Sciatic nerve (tissue), 2 donors: ENCODE measurements at regions of chr11 and their contacts with region 1.

Region 1: DNA sequence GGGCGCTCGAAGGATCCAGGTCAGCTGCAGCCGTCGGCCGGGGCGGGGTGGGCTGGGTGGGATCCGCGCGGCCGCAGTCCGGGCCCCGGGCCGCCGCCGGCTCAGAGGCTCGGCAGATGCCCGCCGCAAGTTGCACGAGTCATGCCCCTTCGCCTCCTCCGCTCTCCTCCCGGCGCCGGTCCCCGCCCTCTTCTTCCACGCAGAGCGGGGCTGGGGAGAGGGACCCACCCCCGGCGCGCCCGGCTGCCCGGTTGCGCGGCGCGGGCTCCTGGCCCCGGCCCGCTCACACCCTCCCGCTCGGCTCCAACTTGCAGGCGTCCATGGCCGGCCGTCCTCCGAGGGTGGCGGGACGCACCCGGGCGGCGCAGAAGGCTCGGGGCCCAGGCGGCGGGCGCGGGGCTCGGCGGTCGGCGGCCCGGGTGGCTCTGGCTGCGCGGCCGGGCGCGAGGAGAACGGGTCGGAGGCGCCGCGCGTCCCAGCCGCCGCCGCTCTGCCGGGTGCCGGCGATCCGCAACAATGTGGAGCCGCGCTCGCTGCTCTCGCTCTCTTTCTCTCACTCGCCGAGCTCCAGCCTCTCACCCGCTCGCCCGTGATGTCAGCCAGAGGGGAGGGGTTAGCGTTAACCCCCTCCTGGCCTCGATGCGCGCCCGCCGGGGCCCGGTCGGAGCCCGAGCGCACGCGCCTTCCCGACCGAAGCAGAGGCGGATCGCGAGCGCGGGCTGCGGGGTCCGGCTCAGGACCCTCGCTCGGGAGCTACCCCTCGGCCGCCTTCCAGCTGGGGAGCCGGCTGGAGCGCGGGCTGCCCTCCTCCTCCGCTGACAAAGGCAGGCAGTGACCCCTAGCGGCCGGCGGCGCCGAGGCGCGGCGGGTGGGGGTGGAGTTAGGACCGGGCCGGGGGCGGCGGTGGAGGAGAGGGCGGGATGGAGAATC is at the start of gene NECTIN1:
- DNase-seq: peak; percentile 95
- ATAC-seq: peak; percentile 91
- total RNA-seq, gene NECTIN1: 32.3 TPM

Region 2: GRCh38 chr11:119666463-119667131 is 62.3 kb before region 1 on chr11:
- intact Hi-C with region 1: loop called (anchors 5 kb)
- DNase-seq: peak; percentile 90
- ATAC-seq: peak; percentile 87

Region 3: GRCh38 chr11:119684361-119685110 is 44.4 kb before region 1 on chr11:
- intact Hi-C with region 1: no loop called
- DNase-seq: no peak
- ATAC-seq: peak; percentile 6